Panc1 (cell line): ENCODE measurements at regions of chr10 and their contacts with region 1.

Region 1: GRCh38 chr10:91779011-91779605 is 19.1 kb upstream of the TNKS2 start:
- DNase-seq: no peak
- ATAC-seq: no peak
- H3K4me3 ChIP-seq: no peak overlapping the region
- H3K27ac ChIP-seq: no peak overlapping the region
- H3K4me1 ChIP-seq: no peaks in the 10 kb centered on the region
- H3K27me3 ChIP-seq: peaks cover 9% of the 10 kb centered on the region; the same call in 1 of the 2 replicates
- CTCF ChIP-seq: no peak

Region 2: DNA sequence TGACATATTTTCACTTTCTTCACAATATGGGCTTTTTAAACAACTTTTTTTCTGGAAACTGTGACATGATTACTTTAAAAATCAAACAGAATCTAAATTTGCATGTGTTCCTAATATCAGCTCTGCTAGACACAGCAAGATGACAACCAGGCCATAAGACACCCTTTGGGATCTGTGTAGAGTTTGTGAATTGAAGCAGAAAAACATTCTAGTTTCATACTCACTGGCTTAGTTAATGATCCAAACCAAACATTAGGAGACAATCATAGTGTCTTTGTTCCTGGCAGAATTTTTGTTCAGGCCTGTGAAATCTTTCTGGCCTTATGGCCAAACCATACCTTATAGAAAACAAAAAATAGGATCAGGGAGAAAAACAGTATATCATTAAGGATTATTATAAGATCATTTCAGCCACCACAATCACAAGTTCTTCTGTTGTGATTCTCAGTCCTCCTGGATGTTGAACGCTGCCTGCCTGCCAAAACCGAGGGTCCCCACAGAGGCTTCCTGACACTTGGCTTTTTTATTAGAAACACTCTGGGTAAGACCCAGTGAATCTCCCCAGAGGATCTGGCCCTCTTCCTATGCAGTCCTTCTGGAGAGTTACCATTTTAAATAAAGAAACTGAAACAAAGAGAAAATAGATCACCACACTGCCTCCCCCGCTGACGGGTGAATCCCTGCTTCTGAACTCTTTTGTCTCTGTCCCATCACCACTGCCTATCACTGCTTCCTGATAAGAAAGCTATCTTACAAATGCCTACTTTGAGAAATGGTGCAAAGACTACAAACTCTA is 67.0 kb before region 1 on chr10:
- CTCF ChIA-PET with region 1: no interaction called
- POLR2A ChIA-PET with region 1: no interaction called
- in situ Hi-C with region 1: no loop called
- intact Hi-C with region 1: loop called (anchors 10 kb)
- DNase-seq: no peak
- ATAC-seq: no peak; the same call in 1 of the 2 replicates
- H3K4me3 ChIP-seq: no peak overlapping the region
- H3K27ac ChIP-seq: no peak overlapping the region
- H3K4me1 ChIP-seq: no peaks in the 10 kb centered on the region
- H3K27me3 ChIP-seq: peaks cover 13% of the 10 kb centered on the region; the same call in 1 of the 2 replicates
- CTCF ChIP-seq: no peak

Region 3: GRCh38 chr10:91758303-91759146 is 20.6 kb before region 1 on chr10:
- CTCF ChIA-PET with region 1: no interaction called
- POLR2A ChIA-PET with region 1: no interaction called
- in situ Hi-C with region 1: no loop called
- intact Hi-C with region 1: no loop called
- DNase-seq: peak; percentile 39
- ATAC-seq: peak; percentile 94
- H3K4me3 ChIP-seq: no peak overlapping the region
- H3K27ac ChIP-seq: no peak overlapping the region
- H3K4me1 ChIP-seq: no peaks in the 10 kb centered on the region
- H3K27me3 ChIP-seq: peaks cover 16% of the 10 kb centered on the region
- CTCF ChIP-seq: peak; percentile 71; the same call in 1 of the 2 replicates